ENCODE measurements at regions of chr1 and their contacts with region 1.

Region 1: GRCh38 chr1:152182431-152182830 is 23.4 kb upstream of the RPTN start:
- DNase-seq: no peak
- H3K4me3 ChIP-seq: no peak overlapping the region
- H3K27ac ChIP-seq: no peak overlapping the region
- H3K4me1 ChIP-seq: peaks cover 5% of the 10 kb centered on the region
- H3K27me3 ChIP-seq: peaks cover 17% of the 10 kb centered on the region
- CTCF ChIP-seq: peak; percentile 52

Region 2: DNA sequence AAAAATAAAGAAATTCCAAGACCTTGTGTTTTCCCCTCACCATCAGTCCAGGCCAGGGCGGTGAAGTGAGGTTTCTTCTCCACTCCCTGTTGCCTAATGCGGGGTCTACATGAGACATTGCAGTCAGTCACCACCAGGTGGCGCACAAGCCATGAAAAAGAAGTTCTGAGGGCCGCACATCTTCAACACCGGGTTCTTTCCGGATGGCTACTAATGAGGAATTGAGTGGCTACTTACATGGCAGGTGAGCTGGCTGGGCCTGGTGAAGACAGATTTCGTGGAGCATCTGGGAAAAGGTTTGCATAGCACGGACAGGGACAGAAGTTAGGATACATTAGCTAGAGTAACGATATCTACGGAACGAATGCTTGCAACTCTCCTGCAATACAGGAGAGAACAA is 129.8 kb before region 1 on chr1:
- intact Hi-C with region 1: loop called (anchors 2 kb)
- DNase-seq: peak; percentile 83
- H3K4me3 ChIP-seq: no peak overlapping the region
- H3K27ac ChIP-seq: no peak overlapping the region
- H3K4me1 ChIP-seq: peaks cover 12% of the 10 kb centered on the region
- H3K27me3 ChIP-seq: peaks cover 48% of the 10 kb centered on the region
- CTCF ChIP-seq: peak; percentile 94

Region 3: GRCh38 chr1:152141974-152142584 is 40.4 kb before region 1 on chr1:
- intact Hi-C with region 1: loop called (anchors 5 kb)
- DNase-seq: peak; percentile 20
- H3K4me3 ChIP-seq: no peak overlapping the region
- H3K27ac ChIP-seq: no peak overlapping the region
- H3K4me1 ChIP-seq: no peaks in the 10 kb centered on the region
- H3K27me3 ChIP-seq: peaks cover 49% of the 10 kb centered on the region
- CTCF ChIP-seq: peak; percentile 76